ENCODE measurements at regions of chrX and their contacts with region 1.

Region 1: DNA sequence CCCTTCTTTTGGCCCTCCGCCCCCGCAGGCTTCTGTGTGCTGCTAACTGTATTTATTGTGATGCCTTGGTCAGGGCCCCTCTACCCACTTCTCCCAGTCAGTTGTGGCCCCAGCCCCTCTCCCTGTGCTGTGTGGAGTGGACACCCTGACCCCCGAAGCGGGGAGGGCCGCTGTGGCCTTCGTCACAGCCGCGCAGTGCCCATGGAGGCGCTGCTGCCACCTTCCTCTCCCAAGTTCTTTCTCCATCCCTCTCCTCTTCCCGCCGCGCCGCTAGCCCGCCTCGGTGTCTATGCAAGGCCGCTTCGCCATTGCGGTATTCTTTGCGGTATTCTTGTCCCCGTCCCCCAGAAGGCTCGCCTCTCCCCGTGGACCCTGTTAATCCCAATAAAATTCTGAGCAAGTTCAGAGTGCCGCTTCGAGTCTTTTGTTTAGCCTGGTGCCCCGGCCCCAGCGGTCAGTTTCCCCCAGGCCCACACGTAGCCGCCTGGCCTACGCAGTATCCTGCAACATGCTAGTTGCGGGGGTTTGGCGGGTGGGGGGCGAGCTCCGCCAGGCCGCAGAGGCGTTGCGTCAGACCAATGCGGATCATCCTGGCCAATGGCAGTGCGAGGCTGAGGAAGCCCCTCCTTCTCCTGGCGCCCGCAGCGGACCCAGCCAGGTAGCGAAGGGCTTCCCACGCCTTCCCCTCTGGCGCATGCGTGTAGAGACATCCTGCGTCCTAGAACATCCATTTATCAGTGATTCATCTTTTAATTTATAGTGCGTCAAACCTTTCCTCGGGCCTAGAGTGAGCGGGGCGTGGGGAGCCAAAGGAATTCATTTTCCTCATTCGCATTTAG is 5.6 kb upstream of the KANTR start:
- DNase-seq: peak; percentile 89 to 92 (median 90)
- H3K4me3 ChIP-seq: peak overlapping the region; percentile 29
- H3K27ac ChIP-seq: peak overlapping the region; percentile 75 to 81
- H3K4me1 ChIP-seq: peaks cover 3% of the 10 kb centered on the region
- H3K27me3 ChIP-seq: no peaks in the 10 kb centered on the region
- CTCF ChIP-seq: no peak
- EP300 ChIP-seq: no peak
- POLR2A ChIP-seq: peak; percentile 57

Region 2: DNA sequence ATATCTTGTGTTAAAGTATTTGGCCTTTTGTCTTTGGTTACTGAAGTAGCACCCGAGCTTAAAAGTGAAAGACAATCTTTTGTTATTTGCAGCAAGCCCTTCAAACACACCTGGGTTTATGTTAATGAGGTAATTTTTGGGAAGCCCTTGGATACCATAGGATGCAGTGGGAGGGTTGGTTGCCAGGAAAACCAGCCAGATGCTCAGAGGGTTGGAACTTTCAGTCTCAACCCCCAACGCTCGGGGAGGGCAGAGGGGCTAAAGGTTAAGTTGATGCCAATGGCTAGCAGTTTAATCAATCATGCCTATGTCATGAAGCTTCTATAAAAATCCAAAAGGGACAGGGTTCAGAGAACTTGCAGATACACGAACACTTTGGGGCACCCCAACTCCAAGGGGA is 57.0 kb before region 1 on chrX:
- intact Hi-C with region 1: no loop called
- DNase-seq: no peak
- H3K4me3 ChIP-seq: no peak overlapping the region
- H3K27ac ChIP-seq: no peak overlapping the region
- H3K4me1 ChIP-seq: no peaks in the 10 kb centered on the region
- H3K27me3 ChIP-seq: no peaks in the 10 kb centered on the region
- CTCF ChIP-seq: no peak
- EP300 ChIP-seq: no peak
- POLR2A ChIP-seq: no peak

Region 3: DNA sequence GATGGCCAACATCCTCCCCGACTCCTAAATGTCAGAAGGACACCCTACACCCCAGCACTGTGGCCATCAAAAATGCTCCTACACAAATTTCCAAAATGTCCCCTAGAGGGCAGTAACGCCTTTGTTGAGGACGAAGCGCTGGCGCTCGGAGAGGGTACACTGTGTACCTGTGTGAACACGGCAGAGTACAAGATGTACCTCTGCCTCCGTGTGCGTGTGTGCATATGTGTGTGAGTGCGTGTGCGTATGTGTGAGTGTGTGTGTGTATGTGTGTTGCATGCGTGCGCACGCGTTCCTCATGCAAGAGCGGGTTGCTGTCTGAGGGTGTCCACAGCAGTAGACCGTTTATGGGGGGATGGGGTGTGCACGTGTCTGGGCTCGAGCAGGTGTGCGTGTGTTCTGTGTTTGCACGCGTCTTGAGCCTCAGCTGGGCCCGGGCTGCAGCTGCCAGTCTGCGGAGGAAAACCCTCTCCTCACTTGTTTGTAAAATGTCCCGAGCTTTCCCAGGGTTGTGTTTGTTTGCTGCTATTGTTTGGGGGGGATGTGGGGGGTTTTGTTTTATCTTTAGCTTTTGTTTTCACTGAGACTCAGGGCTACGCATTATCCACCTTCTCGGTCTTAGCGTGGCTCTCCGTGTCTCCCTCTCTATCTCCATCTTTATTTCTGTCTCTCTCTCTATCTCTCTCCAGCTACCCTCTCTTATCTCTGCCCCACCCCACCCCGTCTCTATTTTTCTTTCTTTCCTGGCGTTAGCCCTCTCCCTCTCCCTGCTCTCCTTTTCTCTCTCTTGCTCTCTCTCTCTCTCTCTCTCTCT is 16.5 kb before region 1 on chrX:
- intact Hi-C with region 1: loop called in 1 of 4 experiments (anchors 2 kb)
- DNase-seq: peak; percentile 69 to 84 (median 75)
- H3K4me3 ChIP-seq: peak overlapping the region; percentile 28
- H3K27ac ChIP-seq: peak overlapping the region; percentile 36 to 91
- H3K4me1 ChIP-seq: peaks cover 2% of the 10 kb centered on the region
- H3K27me3 ChIP-seq: no peaks in the 10 kb centered on the region
- CTCF ChIP-seq: peak; percentile 40 to 77 (median 72)
- EP300 ChIP-seq: peak; percentile 99
- POLR2A ChIP-seq: peak; percentile 39